Sigmoid colon (tissue), 7 donors: ENCODE measurements at regions of chr15 and their contacts with region 1.

Region 1: DNA sequence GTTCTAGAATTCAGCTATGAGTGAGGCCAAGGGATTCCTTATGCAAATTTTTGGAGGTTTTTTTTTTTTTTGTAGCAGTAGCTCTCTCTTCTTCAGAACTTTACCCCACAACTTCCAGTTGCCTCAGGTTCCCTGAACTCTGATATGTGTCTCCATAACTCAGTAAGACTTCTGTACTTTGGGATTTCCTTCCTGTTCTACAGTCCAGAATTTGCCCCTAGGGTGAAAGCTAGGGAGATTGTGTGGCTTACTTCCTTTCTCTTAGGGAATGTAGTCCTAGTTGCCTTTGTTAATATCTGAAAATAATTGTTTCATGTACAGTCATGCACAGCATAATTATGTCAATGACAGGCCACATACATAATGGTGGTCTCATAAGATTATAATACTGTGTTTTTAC is 30.8 kb downstream of the LRRC28 start:
- DNase-seq: no peak
- H3K4me3 ChIP-seq: no peak overlapping the region
- H3K27ac ChIP-seq: no peak overlapping the region
- H3K4me1 ChIP-seq: no peaks in the 10 kb centered on the region
- H3K27me3 ChIP-seq: no peaks in the 10 kb centered on the region
- CTCF ChIP-seq: no peak
- EP300 ChIP-seq: no peak
- POLR2A ChIP-seq: no peak

Region 2: DNA sequence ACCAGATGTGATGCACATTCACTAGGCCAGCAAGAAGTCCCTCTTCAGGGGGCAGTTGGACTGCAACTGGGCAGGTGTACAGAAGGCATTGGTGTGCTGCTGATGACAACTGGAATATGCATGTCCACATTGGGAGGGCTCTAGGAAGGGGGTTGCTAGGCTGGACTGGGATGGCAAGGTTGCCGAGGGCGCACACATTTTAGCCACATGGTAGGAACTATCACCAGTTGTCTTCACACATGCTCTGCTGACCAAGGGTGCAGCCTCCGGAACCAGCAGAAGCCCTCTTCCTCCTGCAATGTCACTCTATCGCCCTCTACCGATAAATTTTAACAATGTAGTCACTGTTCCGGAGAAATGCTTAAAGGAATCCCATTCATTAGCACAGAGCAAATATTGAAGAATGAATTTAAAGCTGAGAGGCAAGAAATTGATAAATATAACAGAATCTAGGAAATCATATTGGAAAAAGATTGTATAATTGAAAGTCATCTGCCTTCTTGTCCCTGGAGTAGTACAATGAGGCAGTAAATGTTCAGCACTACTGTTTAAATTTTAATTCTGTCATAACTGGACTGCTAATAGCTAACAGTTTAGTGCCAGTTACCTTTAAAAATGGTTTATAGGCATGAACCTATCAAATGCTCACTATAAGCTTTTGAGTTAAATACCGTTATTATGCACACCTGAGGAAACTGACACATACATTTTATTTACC is 473.7 kb after region 1 on chr15:
- intact Hi-C with region 1: loop called (anchors 5 kb)
- DNase-seq: peak; percentile 74
- H3K4me3 ChIP-seq: no peak overlapping the region
- H3K27ac ChIP-seq: no peak overlapping the region
- H3K4me1 ChIP-seq: no peaks in the 10 kb centered on the region
- H3K27me3 ChIP-seq: no peaks in the 10 kb centered on the region
- CTCF ChIP-seq: peak; percentile 52 to 87 (median 64)
- EP300 ChIP-seq: no peak
- POLR2A ChIP-seq: no peak